ENCODE measurements at regions of chr4 and their contacts with region 1.

Region 1: DNA sequence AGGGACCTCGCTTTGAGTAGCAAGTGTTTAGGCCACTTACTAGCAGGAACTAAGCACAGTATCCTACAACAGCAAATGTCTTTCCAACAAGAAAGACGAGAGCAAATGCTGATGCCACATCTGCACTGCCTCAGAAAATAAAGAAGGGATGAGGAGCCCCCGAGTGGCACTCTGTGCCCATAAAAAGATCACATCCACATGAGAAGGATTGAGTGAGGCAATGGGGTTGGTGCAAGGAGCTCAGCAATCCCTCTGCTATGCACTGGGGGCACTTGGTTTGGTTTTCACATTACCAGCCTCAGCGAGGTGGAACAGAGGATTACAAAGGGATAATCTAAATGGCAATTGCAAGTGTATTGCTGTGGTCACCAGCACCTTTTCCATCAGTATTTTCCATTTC is 252.8 kb upstream of the SLC7A11 start:
- DNase-seq: peak; percentile 12
- ATAC-seq: peak; percentile 95
- H3K4me3 ChIP-seq: no peak overlapping the region
- H3K27ac ChIP-seq: no peak overlapping the region
- H3K4me1 ChIP-seq: no peaks in the 10 kb centered on the region
- H3K27me3 ChIP-seq: no peaks in the 10 kb centered on the region
- CTCF ChIP-seq: peak; percentile 56
- EP300 ChIP-seq: no peak
- POLR2A ChIP-seq: no peak
- RAD21 ChIP-seq: no peak

Region 2: DNA sequence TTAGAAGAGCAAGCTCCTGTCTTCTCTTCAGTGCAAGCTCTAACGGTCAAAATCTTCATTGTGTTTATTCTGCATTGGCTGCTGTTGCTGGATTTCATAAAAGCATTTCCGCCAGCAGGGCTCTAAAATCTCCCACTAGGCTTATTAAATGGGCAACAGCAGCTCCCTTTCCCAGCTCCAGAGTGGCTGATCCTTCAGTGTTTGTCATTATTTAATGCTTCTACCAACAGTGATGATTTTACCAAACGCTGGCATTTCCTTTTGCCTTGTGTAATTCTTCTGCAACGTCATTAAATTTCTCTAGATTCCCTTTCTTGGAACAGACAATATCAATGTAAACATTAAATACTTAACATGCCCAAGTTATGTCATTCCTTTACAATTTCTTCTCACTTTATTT is 272.9 kb before region 1 on chr4:
- CTCF ChIA-PET with region 1: no interaction called
- POLR2A ChIA-PET with region 1: no interaction called
- in situ Hi-C with region 1: no loop called
- intact Hi-C with region 1: loop called (anchors 10 kb)
- DNase-seq: no peak
- ATAC-seq: no peak
- H3K4me3 ChIP-seq: no peak overlapping the region
- H3K27ac ChIP-seq: no peak overlapping the region
- H3K4me1 ChIP-seq: no peaks in the 10 kb centered on the region
- H3K27me3 ChIP-seq: no peaks in the 10 kb centered on the region
- CTCF ChIP-seq: no peak
- EP300 ChIP-seq: no peak
- POLR2A ChIP-seq: no peak
- RAD21 ChIP-seq: no peak

Region 3: GRCh38 chr4:138279286-138279685 is 215.6 kb before region 1 on chr4:
- CTCF ChIA-PET with region 1: no interaction called
- POLR2A ChIA-PET with region 1: no interaction called
- in situ Hi-C with region 1: no loop called
- intact Hi-C with region 1: no loop called
- DNase-seq: no peak
- ATAC-seq: no peak
- H3K4me3 ChIP-seq: no peak overlapping the region
- H3K27ac ChIP-seq: no peak overlapping the region
- H3K4me1 ChIP-seq: no peaks in the 10 kb centered on the region
- H3K27me3 ChIP-seq: no peaks in the 10 kb centered on the region
- CTCF ChIP-seq: no peak
- EP300 ChIP-seq: no peak
- POLR2A ChIP-seq: no peak
- RAD21 ChIP-seq: no peak

Region 4: DNA sequence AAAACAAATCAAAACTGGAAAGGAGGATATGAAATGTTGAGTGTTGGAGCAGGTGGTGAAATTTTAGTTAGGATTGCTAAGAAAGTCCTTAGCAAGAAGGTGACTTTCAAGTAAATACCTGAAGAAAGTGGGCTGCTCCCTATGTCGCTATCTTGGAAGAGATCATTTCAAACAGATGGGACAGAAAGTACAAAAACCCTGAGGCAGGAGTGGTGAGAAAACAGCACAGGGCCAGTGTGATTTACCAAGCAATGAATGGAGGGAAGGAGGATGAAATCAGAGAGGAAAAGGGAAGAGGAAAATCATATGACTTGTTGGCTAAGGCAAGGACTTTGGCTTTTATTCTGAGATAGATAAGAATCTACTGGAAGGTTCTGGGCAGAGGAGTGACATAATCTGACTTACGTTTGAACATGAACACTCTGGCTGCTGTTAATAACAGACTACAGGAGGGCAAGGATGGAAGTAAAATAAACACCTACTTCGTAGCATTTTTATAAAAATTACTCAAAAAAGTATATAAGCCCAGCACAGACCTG is 45.1 kb before region 1 on chr4:
- CTCF ChIA-PET with region 1: no interaction called
- POLR2A ChIA-PET with region 1: no interaction called
- in situ Hi-C with region 1: no loop called
- intact Hi-C with region 1: loop called (anchors 2 kb)
- DNase-seq: no peak
- ATAC-seq: no peak
- H3K4me3 ChIP-seq: no peak overlapping the region
- H3K27ac ChIP-seq: no peak overlapping the region
- H3K4me1 ChIP-seq: no peaks in the 10 kb centered on the region
- H3K27me3 ChIP-seq: no peaks in the 10 kb centered on the region; a peak in 1 of 5 replicates
- CTCF ChIP-seq: no peak
- EP300 ChIP-seq: no peak
- POLR2A ChIP-seq: no peak
- RAD21 ChIP-seq: no peak